Heart left ventricle (tissue), 16 donors: ENCODE measurements at regions of chr9 and their contacts with region 1.

Region 1: GRCh38 chr9:35481347-35481975 is 8.4 kb upstream of the RUSC2 start:
- DNase-seq: peak in 4 of 5 donors; percentile 33 to 47 (median 41)
- ATAC-seq: peak in 3 of 4 donors; percentile 50 to 66 (median 52)
- H3K4me3 ChIP-seq: no peak overlapping the region
- H3K27ac ChIP-seq: no peak overlapping the region
- H3K4me1 ChIP-seq: peaks cover 0 to 5% (median 0%) of the 10 kb centered on the region in 12 donors
- H3K27me3 ChIP-seq: no peaks in the 10 kb centered on the region
- CTCF ChIP-seq: peak; percentile 45 to 72 (median 60)
- POLR2A ChIP-seq: no peak

Region 2: GRCh38 chr9:34899535-34900158 is 581.8 kb before region 1 on chr9:
- intact Hi-C with region 1: loop called in 6 of 10 experiments (anchors 5 to 10 kb)
- DNase-seq: peak; percentile 71 to 81 (median 77)
- ATAC-seq: peak; percentile 92 to 100 (median 98)
- H3K4me3 ChIP-seq: no peak overlapping the region
- H3K27ac ChIP-seq: no peak overlapping the region
- H3K4me1 ChIP-seq: no peaks in the 10 kb centered on the region
- H3K27me3 ChIP-seq: peaks cover 0 to 25% (median 8%) of the 10 kb centered on the region in 9 donors
- CTCF ChIP-seq: peak; percentile 69 to 89 (median 83)
- POLR2A ChIP-seq: no peak

Region 3: GRCh38 chr9:34984049-34984448 is 497.4 kb before region 1 on chr9:
- intact Hi-C with region 1: no loop called
- DNase-seq: no peak
- ATAC-seq: no peak
- H3K4me3 ChIP-seq: no peak overlapping the region
- H3K27ac ChIP-seq: no peak overlapping the region
- H3K4me1 ChIP-seq: peaks cover 0 to 38% (median 6%) of the 10 kb centered on the region in 12 donors
- H3K27me3 ChIP-seq: no peaks in the 10 kb centered on the region
- CTCF ChIP-seq: no peak
- POLR2A ChIP-seq: no peak

Region 4: DNA sequence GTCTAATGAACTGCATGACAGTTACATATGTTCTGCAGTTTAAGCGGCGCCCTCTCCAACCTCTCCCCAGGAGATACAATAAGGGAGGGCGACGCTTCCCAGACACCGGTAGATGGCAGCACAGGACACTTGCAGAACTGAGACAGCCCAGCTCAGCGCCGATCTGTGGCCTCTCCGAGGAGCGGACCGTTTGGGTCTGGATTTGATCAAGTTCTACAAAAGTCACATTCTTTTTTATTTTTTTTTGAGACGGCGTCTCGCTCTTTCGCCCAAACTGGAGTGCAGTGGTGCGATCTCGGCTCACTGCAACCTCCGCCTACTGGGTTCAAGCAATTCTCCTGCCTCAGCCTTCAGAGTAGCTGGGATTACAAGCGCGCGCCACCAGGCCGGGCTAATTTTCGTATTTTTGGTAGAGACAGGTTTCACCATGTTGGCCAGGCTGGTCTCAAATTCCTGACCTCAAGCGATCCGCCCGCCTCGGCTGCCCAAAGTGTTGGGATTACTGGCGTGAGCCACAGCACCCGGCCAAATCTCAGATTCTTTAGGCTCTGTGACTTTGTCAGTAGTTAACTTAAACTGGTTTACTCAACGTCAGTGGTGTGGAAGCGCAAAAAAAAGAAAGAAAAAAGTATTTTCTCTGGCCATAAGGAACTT is 364.4 kb before region 1 on chr9:
- intact Hi-C with region 1: loop called (anchors 1 to 5 kb)
- DNase-seq: peak; percentile 92 to 95 (median 93)
- ATAC-seq: peak; percentile 74 to 81 (median 76)
- H3K4me3 ChIP-seq: peak overlapping the region in 11 of 12 donors; percentile 49 to 81 (median 65)
- H3K27ac ChIP-seq: peak overlapping the region in 11 of 12 donors; percentile 26 to 98 (median 88)
- H3K4me1 ChIP-seq: peaks cover 0 to 46% (median 34%) of the 10 kb centered on the region in 12 donors
- H3K27me3 ChIP-seq: no peaks in the 10 kb centered on the region
- CTCF ChIP-seq: peak; percentile 93 to 98 (median 95)
- POLR2A ChIP-seq: no peak

Region 5: GRCh38 chr9:35258676-35259474 is 222.6 kb before region 1 on chr9:
- intact Hi-C with region 1: loop called in 7 of 10 experiments (anchors 2 to 10 kb)
- DNase-seq: peak; percentile 62 to 83 (median 68)
- ATAC-seq: peak in 3 of 4 donors; percentile 63 to 83 (median 68)
- H3K4me3 ChIP-seq: no peak overlapping the region
- H3K27ac ChIP-seq: no peak overlapping the region
- H3K4me1 ChIP-seq: peaks cover 0 to 8% (median 0%) of the 10 kb centered on the region in 12 donors
- H3K27me3 ChIP-seq: no peaks in the 10 kb centered on the region
- CTCF ChIP-seq: peak; percentile 50 to 83 (median 73)
- POLR2A ChIP-seq: no peak

Region 6: GRCh38 chr9:35306283-35306682 is 175.2 kb before region 1 on chr9:
- intact Hi-C with region 1: loop called in 2 of 10 experiments (anchors 5 kb)
- DNase-seq: no peak
- ATAC-seq: no peak
- H3K4me3 ChIP-seq: no peak overlapping the region
- H3K27ac ChIP-seq: no peak overlapping the region
- H3K4me1 ChIP-seq: peaks cover 0 to 5% (median under 1%) of the 10 kb centered on the region in 12 donors
- H3K27me3 ChIP-seq: no peaks in the 10 kb centered on the region
- CTCF ChIP-seq: no peak
- POLR2A ChIP-seq: no peak

Region 7: DNA sequence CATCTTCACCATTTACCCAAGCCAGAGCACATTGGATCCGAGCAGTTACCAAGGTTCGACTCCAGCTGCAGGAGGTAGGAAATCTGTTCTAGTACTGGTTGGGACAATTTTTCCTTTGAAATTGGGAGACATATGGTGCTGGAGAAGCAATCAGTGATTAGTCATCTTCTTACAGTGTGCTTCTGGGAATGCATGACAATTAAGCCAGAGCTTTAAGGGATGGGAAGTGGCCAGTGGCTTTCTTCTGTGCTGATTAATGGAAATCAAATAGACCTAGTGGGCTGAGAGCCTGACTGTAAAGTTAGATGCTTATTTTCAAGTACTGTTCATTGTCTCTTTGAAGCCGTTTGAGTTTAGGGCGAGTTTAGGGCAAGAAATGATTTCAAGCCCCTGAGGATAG is 167.5 kb before region 1 on chr9:
- intact Hi-C with region 1: loop called in 3 of 10 experiments (anchors 1 to 5 kb)
- DNase-seq: no peak
- ATAC-seq: no peak
- H3K4me3 ChIP-seq: no peak overlapping the region
- H3K27ac ChIP-seq: no peak overlapping the region
- H3K4me1 ChIP-seq: peaks cover 0 to 21% (median 9%) of the 10 kb centered on the region in 12 donors
- H3K27me3 ChIP-seq: no peaks in the 10 kb centered on the region
- CTCF ChIP-seq: no peak
- POLR2A ChIP-seq: no peak

Region 8: DNA sequence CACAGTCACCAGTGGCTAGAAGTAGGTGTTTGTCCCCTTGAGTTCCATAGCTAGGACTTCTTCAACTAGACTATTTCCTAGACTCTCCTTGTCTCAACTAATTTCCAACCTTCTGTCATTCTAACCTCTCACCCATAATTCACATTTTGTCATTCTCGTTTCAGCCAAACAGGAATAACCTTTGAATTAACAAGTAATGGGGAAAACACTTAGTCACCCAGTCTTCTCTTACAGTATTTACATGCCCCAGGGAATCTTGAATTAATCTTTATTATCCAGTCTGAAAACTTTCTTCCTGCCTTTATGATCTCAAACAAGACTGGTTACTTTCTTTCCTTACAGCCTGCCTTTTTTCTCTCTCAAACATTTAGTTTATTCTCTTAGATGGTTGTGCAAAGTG is 54.8 kb before region 1 on chr9:
- intact Hi-C with region 1: no loop called
- DNase-seq: no peak
- ATAC-seq: no peak
- H3K4me3 ChIP-seq: no peak overlapping the region
- H3K27ac ChIP-seq: no peak overlapping the region
- H3K4me1 ChIP-seq: peaks cover 0 to 4% (median 0%) of the 10 kb centered on the region in 12 donors
- H3K27me3 ChIP-seq: no peaks in the 10 kb centered on the region
- CTCF ChIP-seq: no peak
- POLR2A ChIP-seq: no peak

Region 9: DNA sequence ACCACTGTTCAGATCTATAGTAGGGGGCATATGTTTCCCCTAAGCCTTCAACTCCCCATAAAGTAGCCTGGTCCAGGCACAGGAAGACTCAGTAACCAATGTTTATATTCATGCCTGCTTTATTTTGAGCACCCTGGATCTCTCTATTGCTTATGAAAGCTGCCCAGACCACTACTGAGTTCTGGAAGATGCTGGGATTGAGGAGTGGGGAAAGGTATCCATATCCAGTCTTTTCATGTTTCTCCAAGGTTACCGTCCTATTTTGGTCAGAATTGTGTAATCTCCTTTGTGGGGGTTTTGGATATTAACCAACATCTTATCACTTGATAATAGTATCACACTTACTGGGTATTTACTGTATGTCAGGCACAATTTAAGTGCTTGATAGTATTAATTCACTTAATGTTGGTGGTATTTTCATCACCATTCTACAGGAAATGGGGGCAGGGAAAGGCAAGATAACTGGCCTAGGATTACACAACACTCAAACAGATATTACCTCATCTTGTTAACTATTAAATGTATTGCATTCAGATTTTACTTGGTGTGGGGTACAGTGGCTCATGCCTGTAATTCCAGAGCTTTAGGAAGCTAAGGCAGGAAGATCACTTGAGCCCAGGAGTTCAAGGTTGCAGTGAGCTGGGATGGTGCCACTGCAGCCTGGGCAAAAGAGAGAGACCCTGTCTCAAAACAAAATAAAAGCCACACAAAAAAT is 44.8 kb after region 1 on chr9:
- intact Hi-C with region 1: no loop called
- DNase-seq: no peak
- ATAC-seq: peak in 3 of 4 donors; percentile 27 to 63 (median 46)
- H3K4me3 ChIP-seq: no peak overlapping the region
- H3K27ac ChIP-seq: peak overlapping the region in 8 of 12 donors; percentile 2 to 76 (median 44)
- H3K4me1 ChIP-seq: peaks cover 0 to 55% (median 35%) of the 10 kb centered on the region in 12 donors
- H3K27me3 ChIP-seq: no peaks in the 10 kb centered on the region
- CTCF ChIP-seq: no peak
- POLR2A ChIP-seq: no peak

Region 10: DNA sequence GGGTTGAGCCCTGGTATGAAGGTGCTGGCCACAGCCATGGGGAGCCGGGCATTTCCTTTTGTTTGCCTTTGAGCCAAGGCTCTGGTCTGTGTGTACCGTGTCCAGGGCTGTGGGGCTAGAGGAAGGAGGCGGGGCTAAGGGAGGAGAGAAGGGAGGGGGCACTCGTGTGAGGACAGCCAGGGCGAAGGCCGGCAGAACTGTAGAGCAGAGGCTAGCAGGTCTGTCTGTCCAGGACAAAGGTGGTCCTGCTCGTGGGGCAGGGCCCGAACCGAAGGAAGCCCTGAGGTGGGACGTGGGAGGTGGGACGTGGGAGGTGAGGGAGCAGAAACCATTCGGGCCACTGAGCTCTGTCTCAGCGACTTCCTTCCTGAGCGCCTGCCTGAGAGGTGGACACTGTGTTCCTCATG is 82.3 kb after region 1 on chr9:
- intact Hi-C with region 1: loop called in 1 of 10 experiments (anchors 5 kb)
- DNase-seq: peak in 3 of 5 donors; percentile 51 to 53 (median 51)
- ATAC-seq: peak; percentile 65 to 79 (median 66)
- H3K4me3 ChIP-seq: peak overlapping the region in 8 of 12 donors; percentile 1 to 42 (median 32)
- H3K27ac ChIP-seq: peak overlapping the region in 11 of 12 donors; percentile 26 to 77 (median 57)
- H3K4me1 ChIP-seq: peaks cover 4 to 34% (median 24%) of the 10 kb centered on the region in 12 donors
- H3K27me3 ChIP-seq: no peaks in the 10 kb centered on the region
- CTCF ChIP-seq: no peak
- POLR2A ChIP-seq: no peak

Region 11: DNA sequence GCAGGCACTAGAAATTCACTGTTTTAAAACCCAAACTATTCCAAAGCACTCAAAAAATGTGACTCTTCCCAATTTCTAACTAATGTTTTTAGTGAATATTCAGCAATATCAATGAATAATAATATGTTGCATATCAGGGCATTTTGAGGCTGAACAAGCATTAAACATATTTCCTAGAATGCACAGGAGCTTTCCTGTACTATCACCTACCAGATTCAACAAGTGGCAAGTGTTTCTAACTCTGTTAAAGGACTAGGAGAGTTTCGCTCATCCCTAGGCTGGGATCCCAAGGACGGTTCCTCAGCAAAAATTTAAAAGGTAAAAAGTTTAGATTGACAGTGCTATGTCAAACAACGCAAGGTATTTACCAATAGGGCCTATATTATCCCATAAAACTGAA is 755.8 kb after region 1 on chr9:
- intact Hi-C with region 1: no loop called
- DNase-seq: no peak
- ATAC-seq: no peak
- H3K4me3 ChIP-seq: no peak overlapping the region
- H3K27ac ChIP-seq: no peak overlapping the region
- H3K4me1 ChIP-seq: no peaks in the 10 kb centered on the region
- H3K27me3 ChIP-seq: no peaks in the 10 kb centered on the region
- CTCF ChIP-seq: no peak
- POLR2A ChIP-seq: no peak